ENCODE measurements at regions of chr13 and their contacts with region 1.

Region 1: GRCh38 chr13:80363890-80364503 is 23.1 kb upstream of the SPRY2 start:
- DNase-seq: peak; percentile 49
- ATAC-seq: no peak
- H3K4me3 ChIP-seq: 0 out of 2 replicates have a peak overlapping the region, but pooled peaks have one; percentile 23
- H3K27ac ChIP-seq: no peak overlapping the region
- H3K4me1 ChIP-seq: peaks cover 7% of the 10 kb centered on the region; the same call in 1 of the 2 replicates
- H3K27me3 ChIP-seq: no peaks in the 10 kb centered on the region
- CTCF ChIP-seq: peak; percentile 80

Region 2: GRCh38 chr13:79679334-79679733 is 684.7 kb before region 1 on chr13:
- CTCF ChIA-PET with region 1: no interaction called
- POLR2A ChIA-PET with region 1: no interaction called
- intact Hi-C with region 1: loop called (anchors 1 kb)
- DNase-seq: peak; percentile 76
- ATAC-seq: peak; percentile 66
- H3K4me3 ChIP-seq: no peak overlapping the region
- H3K27ac ChIP-seq: no peak overlapping the region
- H3K4me1 ChIP-seq: peaks cover 11% of the 10 kb centered on the region; the same call in 1 of the 2 replicates
- H3K27me3 ChIP-seq: no peaks in the 10 kb centered on the region
- CTCF ChIP-seq: peak; percentile 86

Region 3: GRCh38 chr13:80551650-80552497 is 187.9 kb after region 1 on chr13:
- CTCF ChIA-PET with region 1: no interaction called
- POLR2A ChIA-PET with region 1: no interaction called
- intact Hi-C with region 1: loop called (anchors 5 kb)
- DNase-seq: peak; percentile 44
- ATAC-seq: peak; percentile 78
- H3K4me3 ChIP-seq: no peak overlapping the region; the same call in 1 of the 2 replicates
- H3K27ac ChIP-seq: peak overlapping the region; percentile 45
- H3K4me1 ChIP-seq: peaks cover 22% of the 10 kb centered on the region
- H3K27me3 ChIP-seq: no peaks in the 10 kb centered on the region
- CTCF ChIP-seq: no peak

Region 4: GRCh38 chr13:81017513-81018152 is 653.6 kb after region 1 on chr13:
- CTCF ChIA-PET with region 1: interaction called, 5 read pairs
- POLR2A ChIA-PET with region 1: no interaction called
- intact Hi-C with region 1: loop called (anchors 5 kb)
- DNase-seq: peak; percentile 61
- ATAC-seq: peak; percentile 55
- H3K4me3 ChIP-seq: no peak overlapping the region
- H3K27ac ChIP-seq: no peak overlapping the region
- H3K4me1 ChIP-seq: no peaks in the 10 kb centered on the region
- H3K27me3 ChIP-seq: no peaks in the 10 kb centered on the region
- CTCF ChIP-seq: peak; percentile 67